Activated CD4-positive, alpha-beta T cell treated with anti-CD3 and anti-CD28 coated beads for 36 hours (primary cell): ENCODE measurements at regions of chr2 and their contacts with region 1.

Region 1: GRCh38 chr2:160294339-160294803 is 94.3 kb upstream of the ITGB6 start:
- DNase-seq: peak; percentile 69
- ATAC-seq: peak; percentile 93
- H3K4me3 Mint-ChIP-seq: no peak overlapping the region
- H3K27ac Mint-ChIP-seq: peak overlapping the region; percentile 88
- H3K4me1 Mint-ChIP-seq: peaks cover 86% of the 10 kb centered on the region
- H3K27me3 Mint-ChIP-seq: no peaks in the 10 kb centered on the region

Region 2: GRCh38 chr2:160269803-160270570 is 24.4 kb before region 1 on chr2:
- CTCF ChIA-PET with region 1: interaction called, 13 read pairs
- POLR2A ChIA-PET with region 1: interaction called, 3 read pairs
- intact Hi-C with region 1: loop called (anchors 2 kb)
- DNase-seq: peak; percentile 80
- ATAC-seq: peak; percentile 59
- H3K4me3 Mint-ChIP-seq: peak overlapping the region; percentile 57
- H3K27ac Mint-ChIP-seq: peak overlapping the region; percentile 52
- H3K4me1 Mint-ChIP-seq: peaks cover 46% of the 10 kb centered on the region
- H3K27me3 Mint-ChIP-seq: no peaks in the 10 kb centered on the region

Region 3: GRCh38 chr2:160278879-160279177 is 15.5 kb before region 1 on chr2:
- CTCF ChIA-PET with region 1: interaction called, 5 read pairs
- POLR2A ChIA-PET with region 1: interaction called, 3 read pairs
- intact Hi-C with region 1: loop called in 1 of 2 experiments (anchors 1 kb)
- DNase-seq: no peak
- ATAC-seq: no peak
- H3K4me3 Mint-ChIP-seq: no peak overlapping the region
- H3K27ac Mint-ChIP-seq: no peak overlapping the region
- H3K4me1 Mint-ChIP-seq: peaks cover 31% of the 10 kb centered on the region
- H3K27me3 Mint-ChIP-seq: no peaks in the 10 kb centered on the region